ENCODE measurements at regions of chr5 and their contacts with region 1.

Region 1: DNA sequence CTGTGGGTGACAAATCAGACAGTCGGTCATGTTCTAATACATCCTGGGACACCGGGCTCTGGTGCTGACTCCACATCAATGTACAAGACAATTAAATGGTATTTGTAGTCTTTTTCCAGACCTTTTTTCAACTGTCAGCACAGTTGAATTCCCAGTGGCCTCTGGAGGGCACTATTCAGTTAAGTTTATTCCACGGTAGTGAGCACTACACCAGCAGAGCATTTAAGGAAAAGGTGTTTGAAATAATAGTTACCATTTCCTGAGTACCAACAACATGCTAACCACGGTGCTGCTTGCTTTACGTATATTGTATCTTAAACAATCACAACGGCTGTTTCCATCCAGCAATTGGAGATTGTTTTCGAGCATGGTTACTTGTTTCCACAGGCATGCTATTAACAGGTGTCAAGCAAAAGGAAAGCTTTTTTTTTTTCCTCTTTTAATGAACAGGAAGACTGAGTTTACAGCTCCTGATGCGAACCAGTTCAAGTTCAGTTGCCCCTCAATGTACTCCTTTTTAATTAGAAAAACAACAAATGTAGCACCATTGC is 186.7 kb downstream of the PDZD2 start:
- DNase-seq: peak; percentile 59
- ATAC-seq: peak; percentile 91
- H3K4me3 ChIP-seq: no peak overlapping the region
- H3K27ac ChIP-seq: no peak overlapping the region
- H3K4me1 ChIP-seq: no peaks in the 10 kb centered on the region
- H3K27me3 ChIP-seq: peaks cover 25% of the 10 kb centered on the region
- CTCF ChIP-seq: peak; percentile 75
- POLR2A ChIP-seq: no peak
- RAD21 ChIP-seq: peak; percentile 73

Region 2: GRCh38 chr5:31581498-31582099 is 244.0 kb before region 1 on chr5:
- CTCF ChIA-PET with region 1: no interaction called
- POLR2A ChIA-PET with region 1: no interaction called
- dilution Hi-C with region 1: no loop called
- in situ Hi-C with region 1: no loop called
- intact Hi-C with region 1: loop called (anchors 5 kb)
- DNase-seq: peak; percentile 52
- ATAC-seq: no peak
- H3K4me3 ChIP-seq: no peak overlapping the region
- H3K27ac ChIP-seq: no peak overlapping the region
- H3K4me1 ChIP-seq: peaks cover 2% of the 10 kb centered on the region
- H3K27me3 ChIP-seq: peaks cover 5% of the 10 kb centered on the region
- CTCF ChIP-seq: peak; percentile 63
- POLR2A ChIP-seq: no peak
- RAD21 ChIP-seq: peak; percentile 69

Region 3: GRCh38 chr5:31934156-31934555 is 108.6 kb after region 1 on chr5:
- CTCF ChIA-PET with region 1: no interaction called
- POLR2A ChIA-PET with region 1: no interaction called
- dilution Hi-C with region 1: no loop called
- in situ Hi-C with region 1: no loop called
- intact Hi-C with region 1: no loop called
- DNase-seq: no peak
- ATAC-seq: no peak
- H3K4me3 ChIP-seq: no peak overlapping the region
- H3K27ac ChIP-seq: no peak overlapping the region
- H3K4me1 ChIP-seq: no peaks in the 10 kb centered on the region
- H3K27me3 ChIP-seq: peaks cover 39% of the 10 kb centered on the region
- CTCF ChIP-seq: no peak
- POLR2A ChIP-seq: no peak
- RAD21 ChIP-seq: no peak

Region 4: GRCh38 chr5:32057162-32058096 is 231.8 kb after region 1 on chr5:
- CTCF ChIA-PET with region 1: no interaction called
- POLR2A ChIA-PET with region 1: no interaction called
- dilution Hi-C with region 1: loop called (anchors 25 kb)
- in situ Hi-C with region 1: no loop called
- intact Hi-C with region 1: no loop called
- DNase-seq: no peak
- ATAC-seq: no peak
- H3K4me3 ChIP-seq: no peak overlapping the region
- H3K27ac ChIP-seq: no peak overlapping the region
- H3K4me1 ChIP-seq: no peaks in the 10 kb centered on the region
- H3K27me3 ChIP-seq: peaks cover 30% of the 10 kb centered on the region
- CTCF ChIP-seq: peak; percentile 19; the same call in 1 of the 2 replicates
- POLR2A ChIP-seq: no peak
- RAD21 ChIP-seq: no peak

Region 5: DNA sequence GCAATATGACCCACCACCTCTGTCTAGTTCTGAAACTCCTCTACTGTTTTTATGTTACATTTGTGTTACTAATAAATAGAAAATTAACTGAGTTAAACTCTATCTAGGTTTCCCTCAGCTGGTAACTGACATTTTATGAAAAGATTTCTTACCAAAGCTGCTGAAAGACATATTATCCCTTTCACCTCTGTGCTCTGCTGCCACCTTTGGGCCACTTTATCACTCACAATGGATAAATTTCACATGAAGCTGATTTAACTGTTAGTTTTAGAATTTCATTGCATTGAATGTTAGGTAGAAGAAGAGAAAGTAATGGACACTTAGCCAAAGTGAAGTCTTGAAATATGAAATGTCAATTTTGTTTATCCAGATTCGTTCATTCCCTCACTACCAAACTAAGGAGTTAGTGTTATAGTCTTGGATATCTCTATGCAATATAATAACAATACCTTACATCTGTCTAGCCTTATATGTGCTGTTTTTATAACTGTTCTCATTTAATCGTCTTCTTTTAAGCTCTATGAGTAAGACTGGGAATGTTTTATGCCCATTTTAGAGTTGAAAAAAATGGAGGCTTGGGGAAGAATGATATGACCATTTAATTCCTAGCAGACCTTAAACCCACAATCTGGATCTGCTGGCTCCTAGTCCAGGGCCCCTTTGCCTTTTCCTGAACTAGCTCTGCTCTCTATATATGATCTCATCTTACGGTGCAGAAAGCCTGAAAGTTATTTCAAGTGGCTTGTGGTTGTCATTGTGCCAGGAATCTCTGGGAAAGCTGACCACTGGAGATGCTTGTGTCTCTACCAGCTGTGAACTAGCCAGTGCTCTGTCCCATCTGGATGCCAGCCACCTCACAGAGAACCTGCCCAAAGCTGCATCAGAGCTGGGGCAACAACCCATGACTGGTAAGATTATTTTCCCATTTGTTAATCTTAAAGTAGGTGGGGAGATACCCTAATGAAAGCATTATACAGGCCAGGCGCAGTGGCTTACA is 251.4 kb after region 1 on chr5:
- CTCF ChIA-PET with region 1: interaction called, 33 read pairs
- POLR2A ChIA-PET with region 1: interaction called, 6 read pairs
- dilution Hi-C with region 1: loop called (anchors 25 kb)
- in situ Hi-C with region 1: loop called (anchors 10 kb)
- intact Hi-C with region 1: loop called (anchors 1 kb)
- DNase-seq: peak; percentile 59
- ATAC-seq: peak; percentile 69
- H3K4me3 ChIP-seq: no peak overlapping the region
- H3K27ac ChIP-seq: no peak overlapping the region
- H3K4me1 ChIP-seq: no peaks in the 10 kb centered on the region
- H3K27me3 ChIP-seq: peaks cover 13% of the 10 kb centered on the region
- CTCF ChIP-seq: peak; percentile 84
- POLR2A ChIP-seq: no peak
- RAD21 ChIP-seq: peak; percentile 91

Region 6: DNA sequence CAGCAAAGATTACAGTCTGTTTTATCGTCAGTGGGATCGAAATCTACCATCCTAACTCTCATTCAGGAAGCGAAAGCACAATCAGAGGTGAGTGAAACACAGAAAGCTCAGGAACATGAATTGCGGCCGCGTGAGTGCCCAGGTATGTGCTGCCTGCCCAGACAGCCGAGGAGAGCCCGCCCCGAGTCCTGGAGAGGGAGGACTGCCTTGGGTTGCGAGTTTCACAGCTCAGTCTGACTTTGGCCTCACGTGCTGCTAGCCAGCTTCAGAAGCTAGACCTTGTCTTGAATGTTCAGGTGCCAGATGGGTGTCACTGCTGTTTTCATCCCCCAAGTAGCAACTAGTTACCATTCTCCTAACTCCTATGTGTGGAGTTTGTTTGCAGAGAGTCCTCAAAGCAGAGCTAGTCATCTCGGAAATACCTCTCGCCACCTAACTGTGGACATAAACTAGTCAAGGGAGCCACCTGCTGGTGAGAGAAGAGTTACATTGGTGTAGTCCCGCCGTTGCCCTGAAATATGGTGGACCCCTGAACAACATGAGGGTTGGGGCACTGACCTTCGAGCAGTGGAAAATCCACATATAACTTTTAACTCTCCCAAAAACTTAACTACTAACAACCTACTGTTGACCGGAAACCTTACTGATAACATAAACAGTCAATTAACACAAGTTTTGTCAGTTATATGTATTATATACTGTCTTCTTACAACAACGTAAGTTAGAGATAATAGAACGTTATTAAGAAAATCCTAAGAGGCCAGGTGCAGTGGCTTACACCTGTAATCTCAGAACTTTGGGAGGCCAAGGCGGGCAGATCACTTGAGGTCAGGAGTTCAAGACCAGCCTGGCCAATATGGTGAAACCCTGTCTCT is 267.6 kb after region 1 on chr5:
- CTCF ChIA-PET with region 1: interaction called, 16 read pairs
- POLR2A ChIA-PET with region 1: no interaction called
- dilution Hi-C with region 1: no loop called
- in situ Hi-C with region 1: loop called (anchors 5 kb)
- intact Hi-C with region 1: loop called (anchors 1 kb)
- DNase-seq: peak; percentile 78
- ATAC-seq: peak; percentile 91
- H3K4me3 ChIP-seq: no peak overlapping the region
- H3K27ac ChIP-seq: no peak overlapping the region
- H3K4me1 ChIP-seq: no peaks in the 10 kb centered on the region
- H3K27me3 ChIP-seq: no peaks in the 10 kb centered on the region
- CTCF ChIP-seq: peak; percentile 68
- POLR2A ChIP-seq: no peak
- RAD21 ChIP-seq: peak; percentile 81

Region 7: DNA sequence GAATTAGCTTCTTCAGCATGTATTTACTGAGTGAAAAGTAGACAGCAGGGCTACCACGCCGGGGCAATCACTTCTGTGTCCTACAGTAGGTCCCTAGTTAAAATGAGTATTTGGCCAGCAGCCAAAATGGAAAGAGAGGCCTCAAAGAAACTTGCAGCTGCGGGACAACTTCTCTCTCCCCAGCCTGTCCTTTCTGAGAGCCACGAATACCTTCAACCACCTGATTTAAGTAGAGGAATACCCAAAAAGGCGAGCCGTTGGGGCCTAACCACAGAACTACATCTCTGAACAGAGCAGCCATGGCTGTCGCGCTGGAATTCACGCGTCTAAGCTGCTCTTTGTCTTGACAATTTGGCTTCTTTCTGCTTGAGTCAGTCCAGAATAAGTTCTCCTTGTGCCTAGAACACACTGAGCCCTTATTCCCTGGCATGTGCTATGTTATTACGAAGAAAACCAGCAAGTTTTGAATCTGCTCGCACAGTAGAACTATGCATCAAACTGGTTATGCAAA is 392.3 kb after region 1 on chr5:
- CTCF ChIA-PET with region 1: no interaction called
- POLR2A ChIA-PET with region 1: no interaction called
- dilution Hi-C with region 1: no loop called
- in situ Hi-C with region 1: no loop called
- intact Hi-C with region 1: no loop called
- DNase-seq: no peak
- ATAC-seq: no peak; the same call in none of the 2 replicates
- H3K4me3 ChIP-seq: no peak overlapping the region
- H3K27ac ChIP-seq: no peak overlapping the region
- H3K4me1 ChIP-seq: peaks cover 4% of the 10 kb centered on the region
- H3K27me3 ChIP-seq: no peaks in the 10 kb centered on the region
- CTCF ChIP-seq: no peak
- POLR2A ChIP-seq: no peak
- RAD21 ChIP-seq: no peak

Region 8: GRCh38 chr5:32551865-32552264 is 726.3 kb after region 1 on chr5:
- CTCF ChIA-PET with region 1: no interaction called
- POLR2A ChIA-PET with region 1: no interaction called
- dilution Hi-C with region 1: no loop called
- in situ Hi-C with region 1: no loop called
- intact Hi-C with region 1: loop called (anchors 5 kb)
- DNase-seq: no peak
- ATAC-seq: no peak
- H3K4me3 ChIP-seq: no peak overlapping the region
- H3K27ac ChIP-seq: no peak overlapping the region
- H3K4me1 ChIP-seq: no peaks in the 10 kb centered on the region
- H3K27me3 ChIP-seq: no peaks in the 10 kb centered on the region
- CTCF ChIP-seq: no peak
- POLR2A ChIP-seq: no peak
- RAD21 ChIP-seq: no peak